Activated B cell treated with CpG ODN at 0.5 μM for 24 hours (primary cell): ENCODE measurements at regions of chr1 and their contacts with region 1.

Region 1: DNA sequence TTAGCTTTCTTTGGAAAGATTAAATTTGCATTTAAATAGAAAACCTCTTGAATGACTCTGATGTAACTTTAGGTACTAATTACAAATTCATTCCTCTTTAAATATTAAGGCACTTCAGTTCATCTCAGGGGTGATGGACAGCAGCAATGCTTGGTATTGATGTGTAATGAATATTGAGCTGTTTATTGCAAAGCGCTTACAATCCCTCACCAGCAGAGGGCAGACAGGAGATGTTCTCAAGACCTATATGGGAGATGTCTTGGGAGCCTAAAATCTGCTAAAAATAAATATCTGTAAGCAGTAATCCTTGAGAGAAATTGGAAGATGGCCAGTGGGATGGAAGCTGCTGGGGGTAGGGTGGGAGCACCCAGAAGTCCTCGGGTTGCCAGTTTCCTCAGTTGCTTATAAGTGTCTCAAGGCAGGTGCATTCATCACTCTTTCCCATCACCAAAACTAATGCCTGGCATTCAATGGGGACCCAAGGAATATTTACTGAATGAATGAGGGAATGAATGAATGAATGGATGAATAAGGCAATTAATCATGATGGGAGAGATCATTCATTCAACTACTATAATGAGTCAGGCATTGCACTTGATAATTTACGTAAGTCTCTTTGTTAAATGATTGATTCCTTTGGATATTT is 2.3 kb downstream of the KLHDC8A start:
- DNase-seq: no peak
- ATAC-seq: peak; percentile 69
- H3K4me3 Mint-ChIP-seq: no peak overlapping the region
- H3K27ac Mint-ChIP-seq: no peak overlapping the region
- H3K4me1 Mint-ChIP-seq: peaks cover 28% of the 10 kb centered on the region
- H3K27me3 Mint-ChIP-seq: peaks cover 9% of the 10 kb centered on the region
- CTCF ChIP-seq: no peak

Region 2: DNA sequence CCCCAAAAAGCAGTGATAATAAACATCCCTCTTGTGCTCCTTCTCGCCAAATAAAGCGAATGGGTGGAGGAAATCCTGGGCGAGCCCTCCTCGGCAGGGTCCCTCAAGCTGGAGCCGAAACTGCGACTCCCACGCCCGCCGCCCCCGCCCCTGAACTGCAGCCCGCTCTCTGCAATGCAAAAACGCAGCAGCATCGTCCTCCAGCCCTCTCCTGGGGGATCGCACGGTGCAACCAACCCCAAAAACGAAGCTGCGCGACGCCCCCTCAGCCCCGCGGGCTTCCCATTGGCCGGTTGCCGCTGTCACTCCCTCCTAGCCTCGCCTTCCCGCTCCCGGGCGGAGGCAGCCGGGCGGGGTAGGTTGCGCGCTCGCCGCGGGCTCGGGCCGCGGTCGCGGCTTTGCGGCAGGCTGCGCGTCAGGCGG is 126.8 kb before region 1 on chr1 and contains the start of gene TMCC2:
- CTCF ChIA-PET with region 1: no interaction called
- POLR2A ChIA-PET with region 1: no interaction called
- intact Hi-C with region 1: no loop called
- DNase-seq: peak; percentile 73
- ATAC-seq: peak; percentile 88
- H3K4me3 Mint-ChIP-seq: peak within 1 kb of the TSS; percentile 84
- H3K27ac Mint-ChIP-seq: peak within 1 kb of the TSS; percentile 42
- H3K4me1 Mint-ChIP-seq: peaks cover 29% of the 10 kb centered on the region
- H3K27me3 Mint-ChIP-seq: peaks cover 9% of the 10 kb centered on the region
- CTCF ChIP-seq: no peak
- total RNA-seq, gene TMCC2: 1.2 and 1.4 TPM in 2 replicates

Region 3: DNA sequence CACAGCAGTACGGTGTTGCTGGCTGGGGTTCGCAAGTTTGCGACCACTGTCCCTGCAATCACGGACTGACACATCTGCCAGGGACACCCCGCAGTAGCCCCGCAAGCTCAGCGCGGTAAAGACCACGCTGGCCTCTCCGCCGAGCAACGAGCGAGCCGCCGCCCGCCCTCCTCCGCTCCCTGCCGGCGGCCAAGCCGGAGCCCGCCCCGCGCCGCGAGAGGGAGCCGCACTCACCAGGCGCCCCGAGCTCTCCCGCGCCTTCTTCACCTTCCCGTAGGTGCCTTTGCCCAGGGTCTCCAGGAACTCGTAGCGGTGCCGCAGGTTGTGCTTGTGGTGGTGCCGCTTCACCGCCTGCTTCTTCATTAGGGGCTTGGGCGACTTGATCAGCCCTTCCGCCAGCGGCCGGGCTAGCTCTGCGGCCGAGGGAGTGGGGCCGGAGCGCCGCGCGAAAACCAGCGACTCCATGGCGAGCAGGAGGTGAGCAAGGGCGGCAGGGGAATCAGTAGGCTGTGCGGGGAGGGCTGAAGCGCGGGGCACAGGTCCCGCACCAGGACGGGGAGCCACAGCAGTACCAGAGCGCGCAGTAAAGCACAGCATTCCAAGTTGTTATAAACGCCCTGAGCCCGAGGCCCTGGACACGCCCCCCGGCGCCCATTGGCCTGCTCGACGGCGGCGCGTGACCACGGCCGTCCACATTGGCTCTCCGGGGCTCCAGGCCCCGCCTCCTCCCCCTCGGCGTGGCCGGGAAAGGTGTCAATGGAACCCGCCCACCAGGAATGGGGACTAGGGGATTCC is 33.0 kb before region 1 on chr1 and contains the start of gene NUAK2:
- CTCF ChIA-PET with region 1: interaction called, 12 read pairs
- POLR2A ChIA-PET with region 1: no interaction called
- intact Hi-C with region 1: no loop called
- DNase-seq: peak; percentile 83
- ATAC-seq: peak; percentile 86
- H3K4me3 Mint-ChIP-seq: peak within 1 kb of the TSS; percentile 97
- H3K27ac Mint-ChIP-seq: peak within 1 kb of the TSS; percentile 98
- H3K4me1 Mint-ChIP-seq: peaks cover 78% of the 10 kb centered on the region
- H3K27me3 Mint-ChIP-seq: peaks cover 2% of the 10 kb centered on the region
- CTCF ChIP-seq: no peak
- total RNA-seq, gene NUAK2: 26.1 and 26.2 TPM in 2 replicates

Region 4: DNA sequence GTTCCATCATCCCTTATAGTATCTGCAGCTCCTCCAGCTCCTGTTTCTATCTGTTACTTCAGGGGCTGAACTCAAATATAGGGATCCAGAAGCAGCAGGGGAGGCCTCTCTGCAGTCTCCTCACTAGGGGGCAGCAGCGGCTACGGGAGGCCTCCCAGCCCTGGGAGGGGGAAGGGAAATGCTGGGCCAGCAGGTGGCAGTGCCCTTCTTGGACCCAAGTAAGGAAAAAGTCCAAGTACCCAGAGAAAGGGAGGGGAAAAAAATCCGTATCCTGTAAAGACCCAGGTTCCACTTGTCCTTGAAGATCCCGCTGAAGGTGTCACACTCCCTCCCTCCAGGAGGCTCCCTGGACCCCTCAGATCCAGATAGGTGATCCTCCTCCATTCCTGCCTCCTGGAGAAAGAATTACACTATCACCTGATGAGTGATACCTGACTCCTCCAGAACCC is 18.7 kb before region 1 on chr1:
- CTCF ChIA-PET with region 1: interaction called, 31 read pairs
- POLR2A ChIA-PET with region 1: interaction called, 3 read pairs
- intact Hi-C with region 1: loop called (anchors 1 kb)
- DNase-seq: peak; percentile 70
- ATAC-seq: peak; percentile 84
- H3K4me3 Mint-ChIP-seq: no peak overlapping the region
- H3K27ac Mint-ChIP-seq: no peak overlapping the region
- H3K4me1 Mint-ChIP-seq: peaks cover 6% of the 10 kb centered on the region
- H3K27me3 Mint-ChIP-seq: no peaks in the 10 kb centered on the region
- CTCF ChIP-seq: peak; percentile 84

Region 5: GRCh38 chr1:205430696-205431305 is 76.4 kb after region 1 on chr1:
- CTCF ChIA-PET with region 1: no interaction called
- POLR2A ChIA-PET with region 1: no interaction called
- intact Hi-C with region 1: loop called (anchors 5 kb)
- DNase-seq: peak; percentile 67
- ATAC-seq: peak; percentile 85
- H3K4me3 Mint-ChIP-seq: peak overlapping the region; percentile 84
- H3K27ac Mint-ChIP-seq: peak overlapping the region; percentile 55
- H3K4me1 Mint-ChIP-seq: peaks cover 39% of the 10 kb centered on the region
- H3K27me3 Mint-ChIP-seq: no peaks in the 10 kb centered on the region
- CTCF ChIP-seq: no peak

Region 6: DNA sequence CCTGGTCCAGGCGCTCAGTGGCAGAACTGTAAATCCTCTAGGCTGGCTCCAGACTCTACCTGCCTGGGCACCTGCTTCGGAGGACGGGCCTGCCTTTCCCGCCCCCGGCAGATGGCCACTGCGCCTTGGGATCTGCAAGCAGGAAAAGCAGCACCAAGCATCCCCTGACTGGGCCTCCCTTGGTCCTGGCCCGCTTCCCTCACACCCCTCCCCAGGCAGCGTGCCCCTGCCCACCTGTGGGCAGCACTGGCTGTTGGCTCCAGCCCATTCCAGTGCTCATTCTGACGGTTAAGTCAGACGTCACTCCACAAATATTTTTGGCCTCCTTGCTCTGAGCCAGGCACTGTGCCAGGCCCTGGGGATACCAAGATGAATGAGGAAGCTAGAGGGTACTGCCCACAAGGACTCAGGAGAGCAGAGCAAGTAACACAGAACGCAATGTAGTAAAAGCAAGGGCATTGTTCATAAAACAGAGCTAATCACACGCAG is 123.4 kb after region 1 on chr1:
- CTCF ChIA-PET with region 1: interaction called, 11 read pairs
- POLR2A ChIA-PET with region 1: no interaction called
- intact Hi-C with region 1: no loop called
- DNase-seq: no peak
- ATAC-seq: no peak
- H3K4me3 Mint-ChIP-seq: no peak overlapping the region
- H3K27ac Mint-ChIP-seq: no peak overlapping the region
- H3K4me1 Mint-ChIP-seq: peaks cover 32% of the 10 kb centered on the region
- H3K27me3 Mint-ChIP-seq: peaks cover 21% of the 10 kb centered on the region
- CTCF ChIP-seq: no peak